Posterior cingulate gyrus (tissue), 11 donors: ENCODE measurements at regions of chr4 and their contacts with region 1.

Region 1: GRCh38 chr4:42282081-42282901 is 115.0 kb upstream of the SHISA3 start:
- DNase-seq: peak in 7 of 10 donors; percentile 23 to 87 (median 43)

Region 2: DNA sequence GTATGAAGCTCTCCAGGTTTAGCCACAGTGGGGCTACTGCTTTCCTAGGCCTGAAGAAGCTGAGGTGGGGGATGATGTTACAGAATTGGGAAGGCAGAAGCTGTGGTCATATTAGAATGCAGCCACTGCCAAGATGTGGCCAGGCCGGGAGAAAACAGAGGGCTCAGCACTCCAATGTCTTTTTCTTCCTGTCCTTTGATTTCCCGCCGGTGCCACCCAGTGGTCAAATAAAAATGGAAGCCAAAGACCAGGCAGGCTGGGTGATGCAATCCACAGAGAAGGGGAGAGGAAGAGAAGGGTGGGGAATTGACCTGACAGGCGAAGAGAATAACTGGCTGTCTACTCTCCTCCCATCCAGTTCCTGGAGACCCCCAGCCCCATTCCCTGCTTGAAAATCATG is 20.1 kb after region 1 on chr4:
- intact Hi-C with region 1: loop called (anchors 1 kb)
- DNase-seq: peak in 7 of 10 donors; percentile 28 to 87 (median 66)

Region 3: DNA sequence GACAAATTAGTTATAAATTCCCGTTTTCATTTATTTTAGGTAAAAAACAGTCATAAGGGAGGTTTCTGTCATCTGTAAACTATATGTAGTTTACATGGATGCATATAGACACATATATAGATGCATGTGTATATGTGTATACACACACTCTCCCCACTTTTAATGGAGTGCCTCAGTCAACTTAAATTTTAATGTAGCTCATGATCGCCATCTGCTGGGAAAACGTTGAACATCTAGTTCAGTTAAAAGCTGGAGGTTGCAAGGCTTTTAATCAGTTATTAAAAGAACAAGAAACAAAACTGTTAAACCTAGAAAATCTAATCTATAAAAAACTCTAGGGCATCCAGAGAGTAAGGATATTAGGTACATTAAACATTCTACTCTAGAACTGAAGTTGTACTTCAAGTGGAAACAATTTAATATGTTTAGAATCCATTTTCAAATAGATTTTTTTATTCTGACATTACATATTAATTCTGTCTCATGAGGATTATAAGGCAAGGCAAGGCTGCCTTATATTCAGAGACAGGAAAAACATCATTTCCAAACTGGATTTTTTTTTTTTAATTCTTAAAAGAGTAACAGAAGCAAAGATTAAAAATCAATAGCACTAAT is 237.6 kb after region 1 on chr4:
- intact Hi-C with region 1: loop called (anchors 2 kb)
- DNase-seq: peak in 3 of 10 donors; percentile 32 to 40 (median 39)

Region 4: GRCh38 chr4:42865572-42866189 is 583.4 kb after region 1 on chr4:
- intact Hi-C with region 1: loop called (anchors 10 kb)
- DNase-seq: peak in 5 of 10 donors; percentile 7 to 41 (median 27)